ENCODE measurements at regions of chr10 and their contacts with region 1.

Region 1: GRCh38 chr10:122154545-122155366 is 116.3 kb upstream of the BTBD16 start:
- DNase-seq: peak; percentile 43 to 58
- H3K4me3 ChIP-seq: peak overlapping the region; percentile 0 to 7
- H3K27ac ChIP-seq: peak overlapping the region; percentile 74 to 78
- H3K4me1 ChIP-seq: peaks cover 5 to 7% of the 10 kb centered on the region in 2 donors
- H3K27me3 ChIP-seq: no peaks in the 10 kb centered on the region
- CTCF ChIP-seq: peak in 1 of 4 experiments; percentile 17
- POLR2A ChIP-seq: no peak

Region 2: DNA sequence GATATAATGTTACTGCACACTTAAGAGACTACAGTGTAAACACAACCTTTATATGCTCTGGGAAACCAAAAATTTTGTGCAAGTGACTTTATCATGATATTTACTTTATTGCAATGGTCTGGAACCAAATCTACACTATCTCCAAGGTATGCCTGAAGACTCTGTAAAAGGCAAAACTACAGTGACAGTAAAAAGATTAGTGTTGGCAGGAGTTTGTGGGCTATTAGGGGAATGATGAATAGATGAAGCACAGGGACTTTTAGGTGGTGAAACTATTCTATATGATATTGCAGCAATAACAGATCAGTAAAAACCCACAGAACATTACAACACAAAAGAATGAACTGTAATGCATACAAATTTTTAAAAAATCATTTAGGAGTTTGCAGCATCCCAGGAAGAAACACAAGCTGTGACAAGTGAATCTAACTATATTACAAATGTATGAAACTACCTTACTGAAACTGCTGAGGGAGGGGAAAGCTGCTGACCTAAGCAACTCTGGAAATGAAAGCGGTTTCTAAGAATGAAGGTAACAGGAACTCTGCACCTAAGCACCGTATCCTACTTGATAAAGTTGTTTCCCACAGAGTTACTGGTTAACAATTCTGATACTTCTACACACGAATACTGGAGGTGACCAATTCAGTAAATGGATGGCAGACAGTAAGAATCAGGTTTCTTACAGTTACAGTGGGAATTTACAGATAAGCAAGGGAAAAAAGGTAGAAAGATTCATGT is 309.5 kb before region 1 on chr10:
- intact Hi-C with region 1: no loop called
- DNase-seq: no peak
- H3K4me3 ChIP-seq: no peak overlapping the region
- H3K27ac ChIP-seq: no peak overlapping the region
- H3K4me1 ChIP-seq: no peaks in the 10 kb centered on the region
- H3K27me3 ChIP-seq: no peaks in the 10 kb centered on the region
- CTCF ChIP-seq: no peak
- POLR2A ChIP-seq: no peak

Region 3: GRCh38 chr10:122068844-122069243 is 85.9 kb before region 1 on chr10:
- intact Hi-C with region 1: loop called (anchors 5 kb)
- DNase-seq: no peak
- H3K4me3 ChIP-seq: no peak overlapping the region
- H3K27ac ChIP-seq: no peak overlapping the region
- H3K4me1 ChIP-seq: no peaks in the 10 kb centered on the region
- H3K27me3 ChIP-seq: no peaks in the 10 kb centered on the region
- CTCF ChIP-seq: no peak
- POLR2A ChIP-seq: no peak